HEK293 (cell line): ENCODE measurements at regions of chr17 and their contacts with region 1.

Region 1: GRCh38 chr17:77049440-77049839 is 91.3 kb upstream of the SEC14L1 start:
- H3K4me3 ChIP-seq: no peak overlapping the region
- H3K27ac ChIP-seq: no peak overlapping the region
- H3K4me1 ChIP-seq: no peaks in the 10 kb centered on the region
- CTCF ChIP-seq: no peak

Region 2: DNA sequence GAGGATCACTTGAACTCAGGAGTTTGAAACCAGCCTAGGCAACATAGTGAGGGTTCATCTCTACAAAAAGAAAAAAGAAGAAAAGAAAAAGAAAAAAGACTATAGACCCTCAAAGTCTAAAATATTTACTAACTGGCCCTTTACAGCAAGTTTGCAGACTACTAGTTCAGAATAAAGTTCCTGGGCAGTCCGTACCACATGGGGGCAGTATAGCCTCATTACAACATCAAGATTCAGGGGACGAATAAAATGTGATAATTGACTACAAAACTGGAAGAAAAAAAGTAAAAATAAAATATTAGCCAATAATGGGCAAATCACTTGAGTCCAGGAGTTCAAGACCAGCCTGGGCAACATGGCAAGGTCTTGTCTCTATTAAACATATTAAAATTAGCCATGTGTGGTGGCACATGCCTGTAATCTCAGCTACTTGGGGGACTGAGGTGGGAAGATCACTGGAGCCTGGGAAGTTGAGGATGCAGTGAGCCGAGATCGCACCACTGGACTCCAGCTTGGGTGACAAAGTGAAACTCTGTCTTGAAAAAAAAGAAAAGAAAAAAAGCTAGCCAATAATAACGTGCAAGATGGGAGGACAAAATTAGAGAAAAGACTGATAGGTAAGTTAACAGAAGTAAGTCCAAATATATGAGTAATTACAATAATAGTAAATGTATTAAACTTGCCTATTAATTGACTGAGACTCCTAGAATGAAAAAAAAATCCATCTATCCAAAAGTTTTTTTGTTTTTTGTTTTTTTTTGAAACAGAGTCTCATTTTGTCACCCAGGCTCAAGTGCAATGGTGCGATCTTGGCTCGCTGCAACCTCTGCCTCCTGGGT is 38.0 kb before region 1 on chr17:
- CTCF ChIA-PET with region 1: interaction called, 10 read pairs
- POLR2A ChIA-PET with region 1: no interaction called
- H3K4me3 ChIP-seq: no peak overlapping the region
- H3K27ac ChIP-seq: no peak overlapping the region
- H3K4me1 ChIP-seq: no peaks in the 10 kb centered on the region
- CTCF ChIP-seq: no peak